ENCODE measurements at regions of chr2 and their contacts with region 1.

Region 1: DNA sequence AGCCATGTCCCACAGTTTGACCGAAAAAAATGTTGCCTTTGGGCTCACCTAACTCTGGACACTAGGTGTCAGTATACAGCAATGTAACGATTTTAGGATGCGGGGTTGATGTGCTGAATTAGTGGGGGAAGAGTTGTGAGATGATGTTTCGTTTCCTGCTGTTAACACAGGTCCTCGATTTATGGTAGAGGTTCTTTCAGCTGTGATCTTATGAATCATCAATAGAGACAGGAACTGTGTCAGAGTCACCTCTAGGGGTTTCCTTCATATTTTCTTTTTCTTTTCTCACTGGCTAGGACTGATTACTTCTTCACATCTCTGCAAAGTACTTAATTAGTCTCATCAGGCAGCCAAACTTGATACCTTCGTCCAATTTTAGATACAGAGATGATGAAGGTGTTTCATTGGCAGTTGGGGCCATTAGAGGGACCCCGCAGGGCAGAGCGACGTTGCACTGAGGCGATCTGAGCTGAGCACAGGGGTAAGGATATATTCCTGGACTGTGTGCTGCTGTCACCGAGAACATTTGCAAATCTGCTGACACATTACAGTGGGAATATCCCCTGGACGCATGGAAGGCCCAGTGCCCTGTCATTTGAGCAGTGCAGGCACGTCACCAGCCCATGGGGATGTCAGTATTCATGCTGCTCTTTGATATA is 10.2 kb upstream of the MMADHC start:
- DNase-seq: no peak
- H3K4me3 ChIP-seq: peak overlapping the region; percentile 26
- CTCF ChIP-seq: peak; percentile 68

Region 2: DNA sequence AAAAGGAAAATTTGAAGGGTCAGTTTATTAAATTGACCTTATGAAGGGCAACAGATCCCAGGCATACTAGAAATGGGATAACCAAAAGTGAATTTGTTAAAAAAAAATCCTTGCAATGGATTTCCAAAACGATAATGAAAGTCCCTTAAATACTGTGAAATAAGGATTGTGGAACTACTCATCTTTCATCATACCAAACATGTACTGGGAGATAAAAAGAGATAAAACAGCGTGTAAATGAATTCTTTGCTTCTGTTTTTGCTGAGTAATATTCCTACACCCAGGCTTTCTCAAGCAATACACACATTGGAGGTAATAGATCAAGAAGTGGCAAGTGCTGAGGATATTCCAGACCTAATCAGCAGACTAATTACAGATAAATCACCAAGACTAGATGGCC is 263.6 kb before region 1 on chr2:
- CTCF ChIA-PET with region 1: no interaction called
- POLR2A ChIA-PET with region 1: no interaction called
- DNase-seq: no peak
- H3K4me3 ChIP-seq: no peak overlapping the region
- CTCF ChIP-seq: no peak

Region 3: GRCh38 chr2:149587220-149587949 is 10.4 kb before region 1 on chr2 and contains the start of gene MMADHC:
- CTCF ChIA-PET with region 1: interaction called, 13 read pairs
- POLR2A ChIA-PET with region 1: no interaction called
- DNase-seq: peak; percentile 73
- H3K4me3 ChIP-seq: peak within 1 kb of the TSS; percentile 75
- CTCF ChIP-seq: no peak

Region 4: GRCh38 chr2:149611099-149611820 is 13.5 kb after region 1 on chr2:
- CTCF ChIA-PET with region 1: interaction called, 22 read pairs
- POLR2A ChIA-PET with region 1: no interaction called
- DNase-seq: no peak
- H3K4me3 ChIP-seq: no peak overlapping the region
- CTCF ChIP-seq: peak; percentile 22

Region 5: DNA sequence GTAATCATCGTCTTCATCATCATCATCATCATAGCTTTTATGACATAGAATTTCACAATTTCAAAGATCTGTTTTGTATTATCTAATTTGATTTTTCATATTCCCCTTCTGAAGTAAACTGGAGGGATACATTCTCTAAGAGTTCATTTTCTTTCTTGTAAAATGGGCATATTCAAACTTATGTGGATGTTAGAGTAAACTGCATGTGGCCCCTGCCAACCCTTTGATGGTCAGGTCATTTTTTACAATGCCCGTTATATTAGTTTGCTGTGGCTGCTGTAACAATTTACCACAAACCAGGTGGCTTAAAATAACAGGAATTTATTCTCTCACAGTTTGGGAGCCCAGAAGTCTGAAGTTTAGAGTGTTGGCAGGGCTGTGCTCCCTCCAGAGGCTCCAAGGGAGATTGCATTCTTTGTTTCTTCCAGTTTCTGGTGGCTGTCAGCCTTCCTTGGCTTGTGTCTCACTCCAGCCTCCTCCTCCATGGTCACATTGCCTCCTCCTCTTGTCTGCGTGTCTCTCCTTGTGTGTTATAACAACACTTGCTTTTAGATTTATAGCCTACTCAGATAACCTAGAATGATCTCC is 117.3 kb after region 1 on chr2:
- CTCF ChIA-PET with region 1: interaction called, 16 read pairs
- POLR2A ChIA-PET with region 1: no interaction called
- DNase-seq: no peak
- H3K4me3 ChIP-seq: no peak overlapping the region
- CTCF ChIP-seq: peak; percentile 77

Region 6: GRCh38 chr2:149761611-149762010 is 163.8 kb after region 1 on chr2:
- CTCF ChIA-PET with region 1: no interaction called
- POLR2A ChIA-PET with region 1: no interaction called
- DNase-seq: no peak
- H3K4me3 ChIP-seq: no peak overlapping the region
- CTCF ChIP-seq: no peak